PC-9 (cell line): ENCODE measurements at regions of chr10 and their contacts with region 1.

Region 1: DNA sequence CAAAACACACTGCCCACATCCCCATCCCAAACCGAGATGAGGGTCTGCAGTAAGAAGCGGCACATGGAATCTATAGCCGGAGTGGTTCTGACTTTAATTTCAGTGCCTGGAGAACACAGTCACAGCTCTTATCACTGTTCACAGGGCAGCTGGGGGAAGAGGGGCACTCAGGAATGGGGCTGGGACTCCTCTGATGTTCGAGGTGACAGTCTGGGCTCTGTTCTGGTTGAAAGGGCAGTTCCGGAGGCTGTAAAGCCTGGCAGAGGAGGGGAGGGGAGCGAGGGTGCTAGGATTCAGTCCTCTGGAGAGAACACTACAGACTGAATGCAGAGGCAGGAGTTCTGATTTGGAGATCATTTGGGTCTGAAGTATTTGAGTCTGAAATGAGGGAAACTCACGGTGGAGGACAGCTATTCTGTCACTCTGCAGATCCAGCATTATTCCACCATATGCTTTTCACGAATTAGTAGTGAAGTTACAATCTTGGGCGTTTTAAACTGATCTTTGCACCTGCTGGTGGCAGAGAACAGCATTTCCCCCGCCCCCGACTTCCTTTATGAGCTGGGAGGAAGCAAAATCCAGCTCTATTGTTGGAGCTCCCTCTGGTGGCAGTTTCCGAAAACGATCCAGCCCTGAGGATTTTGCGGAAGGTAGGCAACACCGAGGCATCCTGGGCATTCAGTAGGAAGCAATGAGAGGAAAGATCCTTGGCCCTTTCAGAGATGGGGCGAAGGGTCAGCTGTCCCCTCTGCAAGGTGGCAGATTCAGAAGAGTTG is 22.7 kb upstream of the KCNK18 start:
- DNase-seq: peak; percentile 42 to 74
- H3K4me3 ChIP-seq: no peak overlapping the region
- H3K27ac ChIP-seq: no peak overlapping the region
- H3K4me1 ChIP-seq: no peaks in the 10 kb centered on the region
- H3K27me3 ChIP-seq: peaks cover 30% of the 10 kb centered on the region
- CTCF ChIP-seq: peak; percentile 78

Region 2: GRCh38 chr10:115355162-115355760 is 1819.4 kb before region 1 on chr10:
- CTCF ChIA-PET with region 1: no interaction called
- POLR2A ChIA-PET with region 1: no interaction called
- intact Hi-C with region 1: loop called (anchors 10 kb)
- DNase-seq: peak in 1 of 2 experiments; percentile 20
- H3K4me3 ChIP-seq: no peak overlapping the region
- H3K27ac ChIP-seq: no peak overlapping the region
- H3K4me1 ChIP-seq: no peaks in the 10 kb centered on the region
- H3K27me3 ChIP-seq: no peaks in the 10 kb centered on the region
- CTCF ChIP-seq: peak; percentile 73

Region 3: GRCh38 chr10:116444527-116445142 is 730.0 kb before region 1 on chr10:
- CTCF ChIA-PET with region 1: no interaction called
- POLR2A ChIA-PET with region 1: no interaction called
- intact Hi-C with region 1: loop called (anchors 1 kb)
- DNase-seq: peak in 1 of 2 experiments; percentile 1
- H3K4me3 ChIP-seq: no peak overlapping the region
- H3K27ac ChIP-seq: no peak overlapping the region
- H3K4me1 ChIP-seq: no peaks in the 10 kb centered on the region
- H3K27me3 ChIP-seq: 0 out of 2 replicates have a peak, but pooled peaks cover 3% of the 10 kb centered on the region
- CTCF ChIP-seq: peak; percentile 81

Region 4: DNA sequence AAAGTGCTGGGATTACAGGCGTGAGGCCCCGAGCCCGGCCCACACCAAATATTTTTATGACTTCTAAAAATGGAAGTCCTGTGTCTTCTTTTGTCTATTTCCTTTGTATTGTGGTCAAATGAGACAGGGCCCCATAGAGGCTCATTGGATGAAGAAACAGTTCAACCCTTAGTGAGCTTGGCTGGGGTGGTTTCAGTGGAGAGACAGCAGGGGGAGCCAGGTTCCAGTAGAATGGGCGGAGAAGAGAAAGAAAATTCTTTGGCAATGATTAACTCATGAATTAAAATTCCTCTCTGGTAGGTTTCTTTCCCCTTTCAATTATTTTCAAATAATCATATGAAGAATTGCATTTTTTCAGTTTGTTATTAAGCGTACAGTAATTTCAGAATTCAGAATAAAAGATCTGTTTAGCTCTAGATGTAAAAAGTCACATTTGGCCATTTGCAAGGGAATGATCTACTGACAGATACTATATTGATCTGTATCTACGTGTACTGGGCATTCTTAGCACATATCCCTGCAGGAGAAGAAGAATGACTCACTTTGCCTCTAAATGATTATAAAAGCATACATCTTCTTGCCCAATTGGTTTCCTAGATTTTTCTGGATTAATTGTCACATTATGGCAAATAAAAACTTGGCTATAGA is 703.7 kb before region 1 on chr10:
- CTCF ChIA-PET with region 1: no interaction called
- POLR2A ChIA-PET with region 1: no interaction called
- intact Hi-C with region 1: loop called (anchors 5 kb)
- DNase-seq: peak in 1 of 2 experiments; percentile 1
- H3K4me3 ChIP-seq: no peak overlapping the region
- H3K27ac ChIP-seq: no peak overlapping the region
- H3K4me1 ChIP-seq: no peaks in the 10 kb centered on the region
- H3K27me3 ChIP-seq: no peaks in the 10 kb centered on the region
- CTCF ChIP-seq: peak; percentile 32; the same call in 1 of the 2 replicates

Region 5: GRCh38 chr10:116687633-116688032 is 487.0 kb before region 1 on chr10:
- CTCF ChIA-PET with region 1: interaction called, 7 read pairs
- POLR2A ChIA-PET with region 1: no interaction called
- intact Hi-C with region 1: loop called (anchors 1 kb)
- DNase-seq: no peak
- H3K4me3 ChIP-seq: no peak overlapping the region
- H3K27ac ChIP-seq: no peak overlapping the region
- H3K4me1 ChIP-seq: no peaks in the 10 kb centered on the region
- H3K27me3 ChIP-seq: no peaks in the 10 kb centered on the region
- CTCF ChIP-seq: no peak

Region 6: GRCh38 chr10:116796910-116797513 is 377.6 kb before region 1 on chr10:
- CTCF ChIA-PET with region 1: interaction called, 13 read pairs
- POLR2A ChIA-PET with region 1: no interaction called
- intact Hi-C with region 1: loop called (anchors 1 kb)
- DNase-seq: peak; percentile 53 to 57
- H3K4me3 ChIP-seq: no peak overlapping the region
- H3K27ac ChIP-seq: no peak overlapping the region
- H3K4me1 ChIP-seq: no peaks in the 10 kb centered on the region
- H3K27me3 ChIP-seq: peaks cover 4% of the 10 kb centered on the region; the same call in 1 of the 2 replicates
- CTCF ChIP-seq: peak; percentile 95

Region 7: DNA sequence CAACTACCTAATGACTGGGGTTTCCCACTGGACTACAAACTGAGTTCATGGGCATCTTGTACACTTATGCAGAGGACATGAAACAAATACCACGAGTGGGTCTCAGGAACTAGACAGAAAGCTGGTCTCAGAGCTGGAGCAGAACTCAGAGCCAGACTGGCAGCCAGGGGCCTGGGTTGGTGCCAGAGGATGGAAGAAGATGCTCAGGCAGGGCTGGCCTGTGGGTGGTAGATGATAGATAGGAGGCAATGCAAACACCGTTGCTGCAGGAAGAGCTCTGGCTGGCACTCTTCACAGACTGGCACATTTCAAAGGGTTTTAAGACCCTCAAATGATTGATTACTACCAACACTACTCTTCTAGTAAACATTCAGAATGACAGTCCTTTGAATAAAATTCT is 296.5 kb before region 1 on chr10:
- CTCF ChIA-PET with region 1: no interaction called
- POLR2A ChIA-PET with region 1: no interaction called
- intact Hi-C with region 1: no loop called
- DNase-seq: no peak
- H3K4me3 ChIP-seq: no peak overlapping the region
- H3K27ac ChIP-seq: no peak overlapping the region
- H3K4me1 ChIP-seq: no peaks in the 10 kb centered on the region
- H3K27me3 ChIP-seq: no peaks in the 10 kb centered on the region
- CTCF ChIP-seq: no peak